Testis (tissue), 5 donors: ENCODE measurements at regions of chr14 and their contacts with region 1.

Region 1: DNA sequence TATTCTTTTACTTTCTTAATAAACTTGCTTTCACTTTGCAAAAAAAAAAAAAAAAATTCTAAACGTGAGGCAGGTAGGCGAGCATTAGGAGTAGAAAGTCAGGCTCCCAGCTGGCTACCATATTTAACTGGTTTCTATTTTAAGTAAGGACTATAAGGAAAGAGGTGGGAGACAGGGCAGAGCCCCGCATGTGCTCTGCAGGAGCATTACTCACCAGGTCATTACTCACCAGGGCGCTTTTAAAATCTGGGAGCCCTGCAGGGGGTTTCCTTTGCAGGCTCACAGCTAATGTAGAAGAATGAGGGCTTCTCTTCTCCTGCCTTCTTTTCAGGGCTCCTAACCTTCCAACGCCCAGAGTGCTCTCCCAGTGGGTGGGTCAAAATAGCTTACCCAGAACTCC is 14.0 kb upstream of the DPF3 start:
- DNase-seq: no peak
- H3K4me3 ChIP-seq: no peak overlapping the region
- H3K27ac ChIP-seq: no peak overlapping the region
- H3K4me1 ChIP-seq: peaks cover 5% of the 10 kb centered on the region
- H3K27me3 ChIP-seq: no peaks in the 10 kb centered on the region
- CTCF ChIP-seq: no peak
- POLR2A ChIP-seq: no peak

Region 2: GRCh38 chr14:72516936-72517700 is 390.8 kb before region 1 on chr14:
- intact Hi-C with region 1: loop called (anchors 2 kb)
- DNase-seq: peak; percentile 86
- H3K4me3 ChIP-seq: no peak overlapping the region
- H3K27ac ChIP-seq: no peak overlapping the region
- H3K4me1 ChIP-seq: no peaks in the 10 kb centered on the region
- H3K27me3 ChIP-seq: no peaks in the 10 kb centered on the region
- CTCF ChIP-seq: peak; percentile 77 to 97 (median 90)
- POLR2A ChIP-seq: no peak

Region 3: DNA sequence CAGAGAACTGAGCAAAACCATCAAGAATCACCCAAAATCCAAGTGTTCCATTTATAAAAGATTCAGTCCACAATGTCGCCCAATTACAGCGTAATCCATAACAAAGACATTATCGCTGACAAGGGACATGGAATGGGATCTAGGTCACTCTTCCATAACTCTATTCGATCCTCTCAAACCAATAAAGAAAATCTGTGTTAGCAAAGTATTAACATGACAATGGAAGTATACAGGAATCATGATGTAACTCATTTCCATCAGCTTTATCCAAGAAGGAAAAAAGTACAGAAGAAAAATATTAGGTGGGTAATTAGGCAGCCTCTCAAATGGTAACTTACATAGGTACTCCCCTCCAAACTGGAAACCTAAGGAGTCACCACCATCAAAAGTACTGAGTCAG is 114.2 kb after region 1 on chr14:
- intact Hi-C with region 1: no loop called
- DNase-seq: no peak
- H3K4me3 ChIP-seq: no peak overlapping the region
- H3K27ac ChIP-seq: no peak overlapping the region
- H3K4me1 ChIP-seq: peaks cover 11% of the 10 kb centered on the region
- H3K27me3 ChIP-seq: no peaks in the 10 kb centered on the region
- CTCF ChIP-seq: no peak
- POLR2A ChIP-seq: no peak